ENCODE measurements at regions of chr17 and their contacts with region 1.

Region 1: GRCh38 chr17:21318439-21318838 is 33.9 kb downstream of the MAP2K3 start:
- DNase-seq: no peak
- ATAC-seq: no peak
- H3K4me3 ChIP-seq: no peak overlapping the region
- H3K27ac ChIP-seq: no peak overlapping the region
- H3K4me1 ChIP-seq: no peaks in the 10 kb centered on the region
- H3K27me3 ChIP-seq: no peaks in the 10 kb centered on the region
- CTCF ChIP-seq: no peak
- EP300 ChIP-seq: no peak
- POLR2A ChIP-seq: no peak
- RAD21 ChIP-seq: no peak

Region 2: DNA sequence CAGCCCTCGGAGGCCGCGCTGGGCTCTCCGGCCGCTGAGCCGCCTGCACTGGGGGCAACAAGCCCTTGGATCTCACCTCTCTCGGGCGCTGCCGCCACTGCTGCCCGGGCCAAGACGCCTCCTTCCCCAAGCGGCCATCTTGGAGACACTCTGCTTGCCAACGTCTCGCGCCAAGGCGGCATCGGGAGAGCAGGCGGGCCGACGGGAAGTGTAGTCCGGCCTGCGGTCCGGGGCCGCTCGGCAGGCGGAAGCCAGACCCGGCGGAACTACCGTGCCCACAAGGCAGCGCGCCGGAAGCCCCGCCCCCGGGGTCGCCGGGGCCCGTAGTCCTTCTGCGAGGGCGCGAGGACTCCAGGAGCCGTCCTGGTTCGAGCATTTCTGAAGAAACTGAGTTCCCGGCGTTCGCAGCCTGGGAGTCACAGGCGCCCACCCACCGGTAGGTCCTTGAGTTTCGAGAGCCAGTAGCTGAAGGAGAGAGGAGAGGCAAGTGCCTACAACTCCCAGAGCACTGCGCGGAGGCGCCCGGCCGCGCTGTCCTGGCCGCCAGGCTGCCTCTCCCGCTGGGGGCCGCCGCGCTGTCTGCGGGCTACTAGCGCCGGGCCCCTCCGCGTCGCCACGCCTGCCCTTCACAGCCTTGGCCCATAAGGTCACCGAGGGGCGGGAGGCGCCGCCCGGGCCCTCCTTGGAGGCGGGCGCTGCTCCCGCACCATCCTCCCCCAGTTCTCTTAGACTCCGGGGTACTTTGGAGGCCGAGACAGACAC is 104.2 kb before region 1 on chr17 and contains the start of gene TMEM11:
- CTCF ChIA-PET with region 1: no interaction called
- POLR2A ChIA-PET with region 1: no interaction called
- RAD21 ChIA-PET with region 1: no interaction called
- SMC1A ChIA-PET with region 1: no interaction called
- in situ Hi-C with region 1: loop called (anchors 5 kb)
- intact Hi-C with region 1: no loop called
- DNase-seq: peak; percentile 71
- ATAC-seq: peak; percentile 95
- H3K4me3 ChIP-seq: peak within 1 kb of the TSS; percentile 81
- H3K27ac ChIP-seq: peak within 1 kb of the TSS; percentile 90
- H3K4me1 ChIP-seq: peaks cover 9% of the 10 kb centered on the region; the same call in 1 of the 2 replicates
- H3K27me3 ChIP-seq: no peaks in the 10 kb centered on the region
- CTCF ChIP-seq: no peak
- EP300 ChIP-seq: no peak
- POLR2A ChIP-seq: peak; percentile 88
- RAD21 ChIP-seq: no peak
- polyA plus RNA-seq, gene TMEM11: 16.3 to 18.4 TPM

Region 3: DNA sequence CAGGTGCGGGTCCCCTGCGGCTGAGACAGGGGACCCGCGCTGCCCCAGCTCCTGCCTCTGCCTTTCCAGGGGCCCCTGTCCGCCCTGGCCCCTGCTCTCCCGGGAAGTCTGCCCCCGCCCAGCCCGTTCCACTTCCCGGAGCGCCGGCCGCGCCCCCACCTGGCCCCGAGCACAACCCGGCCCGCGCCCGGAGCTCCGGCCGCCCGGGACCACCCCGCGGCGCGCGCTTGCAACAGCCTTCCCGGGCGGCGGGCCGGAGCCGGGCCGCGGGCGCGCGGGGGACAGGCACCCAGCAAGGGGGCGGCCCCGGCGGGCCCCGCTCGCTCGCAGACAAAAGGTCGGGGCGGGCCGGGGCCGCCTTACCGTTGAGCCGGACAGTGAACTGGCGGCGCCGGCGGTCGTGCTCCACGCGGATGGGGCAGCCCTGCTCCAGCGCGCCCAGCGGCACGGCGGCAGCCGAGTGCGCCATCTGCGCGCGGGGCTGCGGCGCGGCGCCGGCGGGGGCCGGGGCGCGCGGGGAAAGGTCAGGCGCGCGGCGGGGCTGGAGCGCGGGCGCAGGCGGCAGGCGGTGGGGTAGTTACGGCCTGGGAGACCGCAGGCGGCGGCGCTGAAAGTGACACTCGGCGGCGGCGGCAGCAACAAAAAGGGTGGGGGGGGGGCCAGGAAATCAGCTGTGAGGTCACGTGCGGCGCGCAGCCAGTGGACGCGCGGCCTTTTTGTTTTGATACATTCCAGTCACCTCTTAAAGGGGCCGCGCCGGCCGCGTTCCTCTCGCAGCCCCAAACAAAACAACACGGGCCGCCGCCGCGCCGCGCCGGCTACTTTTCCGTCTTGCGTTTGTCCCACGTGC is 65.4 kb before region 1 on chr17 and contains the start of gene NATD1:
- CTCF ChIA-PET with region 1: no interaction called
- POLR2A ChIA-PET with region 1: no interaction called
- RAD21 ChIA-PET with region 1: no interaction called
- SMC1A ChIA-PET with region 1: no interaction called
- in situ Hi-C with region 1: loop called (anchors 10 kb)
- intact Hi-C with region 1: no loop called
- DNase-seq: no peak
- ATAC-seq: peak; percentile 74
- H3K4me3 ChIP-seq: peak within 1 kb of the TSS; percentile 70
- H3K27ac ChIP-seq: no peak within 1 kb of the TSS
- H3K4me1 ChIP-seq: peaks cover 4% of the 10 kb centered on the region
- H3K27me3 ChIP-seq: peaks cover 2 to 5% of the 10 kb centered on the region in 2 experiments; a peak in 3 of 4 replicates
- CTCF ChIP-seq: no peak
- EP300 ChIP-seq: no peak
- POLR2A ChIP-seq: peak; percentile 56
- RAD21 ChIP-seq: no peak
- polyA plus RNA-seq, gene NATD1: 0.02 TPM

Region 4: DNA sequence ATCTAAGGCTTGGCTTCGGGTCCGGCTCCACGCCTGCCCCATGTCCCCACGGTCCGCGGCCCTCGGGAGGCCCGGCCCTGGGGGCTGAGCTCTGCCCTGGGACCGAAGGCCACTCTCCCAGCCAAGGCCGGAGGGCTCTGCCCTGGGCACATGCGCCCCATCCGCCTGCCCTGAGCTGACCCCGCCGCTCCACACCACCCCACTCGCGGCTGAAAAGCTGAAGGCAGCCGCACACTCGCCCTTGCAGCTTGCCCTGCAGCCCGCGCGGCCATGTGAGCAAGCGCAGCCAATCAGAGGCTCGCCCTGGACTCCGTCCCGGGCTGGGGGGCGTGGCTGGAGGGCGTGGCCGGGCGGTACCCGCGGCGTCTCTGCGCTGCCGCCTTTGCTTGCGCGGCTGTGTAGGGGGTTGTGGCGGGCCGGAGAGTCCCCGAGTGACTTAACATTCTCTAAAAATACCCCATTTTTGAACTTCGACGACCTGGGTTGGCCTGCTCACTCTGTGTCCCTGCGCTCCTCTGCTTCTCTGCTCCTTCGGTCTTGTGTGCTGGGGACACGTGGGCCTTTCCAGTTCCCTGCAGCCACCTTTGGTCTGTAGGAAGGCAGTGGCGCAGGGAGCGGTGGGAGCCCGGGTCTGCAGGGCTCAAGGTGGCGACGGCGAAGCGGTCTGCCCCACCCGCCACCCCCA is 42.7 kb before region 1 on chr17:
- CTCF ChIA-PET with region 1: interaction called, 5 read pairs
- POLR2A ChIA-PET with region 1: no interaction called
- RAD21 ChIA-PET with region 1: no interaction called
- SMC1A ChIA-PET with region 1: no interaction called
- in situ Hi-C with region 1: loop called (anchors 10 kb)
- intact Hi-C with region 1: no loop called
- DNase-seq: peak; percentile 43
- ATAC-seq: peak; percentile 97
- H3K4me3 ChIP-seq: peak overlapping the region; percentile 72
- H3K27ac ChIP-seq: no peak overlapping the region
- H3K4me1 ChIP-seq: peaks cover 10% of the 10 kb centered on the region
- H3K27me3 ChIP-seq: peaks cover 0 to 5% of the 10 kb centered on the region in 2 experiments; a peak in 3 of 4 replicates
- CTCF ChIP-seq: no peak
- EP300 ChIP-seq: no peak
- POLR2A ChIP-seq: peak; percentile 81
- RAD21 ChIP-seq: no peak

Region 5: DNA sequence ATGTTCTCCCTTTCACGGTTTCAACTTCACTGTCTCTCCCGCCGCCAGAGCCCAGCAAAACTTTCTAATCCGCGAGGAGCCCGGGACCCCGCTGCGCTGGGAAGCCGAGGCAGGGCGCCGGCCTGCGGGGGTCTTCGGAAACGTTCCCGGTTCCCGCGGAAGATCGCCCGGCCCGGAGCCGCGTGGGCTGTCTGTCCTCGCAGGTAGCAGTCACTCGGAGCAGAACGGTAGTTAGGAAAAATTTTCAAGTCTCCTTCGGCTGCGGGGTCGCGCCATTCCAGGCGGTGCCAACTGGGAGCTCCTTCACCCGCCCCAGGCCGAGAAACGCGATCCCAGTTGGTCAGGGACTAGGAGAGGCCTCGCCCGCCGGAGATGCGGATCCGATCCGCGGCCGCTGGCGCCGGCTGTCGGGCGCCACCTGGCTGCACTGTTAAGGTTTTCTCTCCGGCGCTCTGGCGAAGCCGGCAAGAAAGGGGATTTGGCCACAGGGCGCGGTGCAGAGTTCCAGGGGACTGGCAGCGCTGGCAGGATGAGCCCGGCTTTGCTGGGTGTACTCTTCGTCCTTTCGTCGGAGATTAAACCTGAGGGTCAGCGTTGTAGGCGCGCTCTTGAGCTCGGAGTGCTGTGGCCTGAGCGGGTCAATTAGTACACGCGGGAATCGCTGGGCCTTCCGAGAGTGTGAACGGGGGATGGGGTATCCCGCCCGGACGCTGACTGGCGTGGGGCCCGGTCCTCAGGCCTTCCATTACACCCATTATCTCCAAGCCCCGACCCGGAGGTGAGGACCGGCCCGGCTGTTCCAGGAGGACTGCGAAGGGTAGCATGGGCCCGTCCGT is 193.1 kb after region 1 on chr17:
- CTCF ChIA-PET with region 1: no interaction called
- POLR2A ChIA-PET with region 1: no interaction called
- RAD21 ChIA-PET with region 1: no interaction called
- SMC1A ChIA-PET with region 1: no interaction called
- in situ Hi-C with region 1: loop called (anchors 5 kb)
- intact Hi-C with region 1: no loop called
- DNase-seq: no peak
- ATAC-seq: peak; percentile 95
- H3K4me3 ChIP-seq: no peak overlapping the region
- H3K27ac ChIP-seq: no peak overlapping the region
- H3K4me1 ChIP-seq: no peaks in the 10 kb centered on the region
- H3K27me3 ChIP-seq: peaks cover 3 to 11% of the 10 kb centered on the region in 2 experiments
- CTCF ChIP-seq: peak; percentile 54 to 72 (median 59)
- EP300 ChIP-seq: no peak
- POLR2A ChIP-seq: no peak
- RAD21 ChIP-seq: peak; percentile 56

Measured in GM12878 (cell line).